Ascending aorta (tissue), 2 donors: ENCODE measurements at regions of chr5 and their contacts with region 1.

Region 1: DNA sequence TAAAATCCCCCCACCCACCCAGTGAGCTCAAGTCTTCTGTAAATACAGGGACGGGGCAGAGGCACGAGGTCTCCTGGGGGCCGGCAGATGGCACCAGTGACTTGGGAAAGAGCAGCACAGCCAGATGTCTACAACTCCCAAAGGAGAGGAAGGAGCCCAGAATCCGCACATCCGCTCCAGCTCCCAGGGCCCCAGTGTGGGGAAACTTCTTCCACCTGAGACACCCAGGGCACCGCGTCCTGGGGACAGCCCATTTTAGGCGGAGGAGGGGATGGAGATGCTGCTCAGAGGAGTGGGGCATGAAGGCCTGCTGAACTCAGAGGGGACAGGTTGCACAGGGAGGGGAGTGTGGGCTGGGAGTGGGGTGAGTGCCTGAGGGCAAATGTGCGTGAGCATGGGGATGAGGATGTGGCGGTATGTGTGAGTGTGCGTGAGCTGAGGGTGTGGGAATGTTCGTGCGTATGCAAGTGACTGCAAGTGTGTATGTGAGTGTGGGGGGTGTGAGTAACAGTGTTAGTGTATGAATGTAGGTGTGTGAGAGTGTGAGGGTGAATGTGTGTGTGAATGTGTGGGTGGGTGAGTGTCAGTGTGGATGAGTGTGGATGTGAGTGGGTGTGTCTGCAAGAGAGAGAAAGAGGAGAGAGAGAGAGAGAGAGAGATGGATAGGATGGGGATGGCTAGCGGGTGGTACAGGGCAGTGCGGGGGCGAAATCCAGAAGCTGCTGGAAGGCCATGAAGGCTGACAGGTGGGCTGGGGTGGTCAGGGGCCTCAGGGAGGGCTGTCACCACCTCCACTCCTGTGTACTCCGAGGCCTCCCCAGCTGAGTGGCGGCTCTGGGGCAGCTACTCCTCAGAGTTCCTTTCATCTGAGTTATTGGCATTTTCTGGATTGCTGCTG is 63.5 kb downstream of the DUSP1 start:
- DNase-seq: no peak
- H3K4me3 ChIP-seq: no peak overlapping the region
- H3K27ac ChIP-seq: no peak overlapping the region
- H3K4me1 ChIP-seq: no peaks in the 10 kb centered on the region
- H3K27me3 ChIP-seq: no peaks in the 10 kb centered on the region
- CTCF ChIP-seq: peak in 1 of 3 experiments; percentile 20

Region 2: GRCh38 chr5:172646716-172647285 is 60.7 kb before region 1 on chr5:
- intact Hi-C with region 1: no loop called
- DNase-seq: no peak
- H3K4me3 ChIP-seq: no peak overlapping the region
- H3K27ac ChIP-seq: peak overlapping the region in 1 of 2 donors; percentile 6
- H3K4me1 ChIP-seq: no peaks in the 10 kb centered on the region
- H3K27me3 ChIP-seq: no peaks in the 10 kb centered on the region
- CTCF ChIP-seq: peak in 1 of 3 experiments; percentile 27

Region 3: DNA sequence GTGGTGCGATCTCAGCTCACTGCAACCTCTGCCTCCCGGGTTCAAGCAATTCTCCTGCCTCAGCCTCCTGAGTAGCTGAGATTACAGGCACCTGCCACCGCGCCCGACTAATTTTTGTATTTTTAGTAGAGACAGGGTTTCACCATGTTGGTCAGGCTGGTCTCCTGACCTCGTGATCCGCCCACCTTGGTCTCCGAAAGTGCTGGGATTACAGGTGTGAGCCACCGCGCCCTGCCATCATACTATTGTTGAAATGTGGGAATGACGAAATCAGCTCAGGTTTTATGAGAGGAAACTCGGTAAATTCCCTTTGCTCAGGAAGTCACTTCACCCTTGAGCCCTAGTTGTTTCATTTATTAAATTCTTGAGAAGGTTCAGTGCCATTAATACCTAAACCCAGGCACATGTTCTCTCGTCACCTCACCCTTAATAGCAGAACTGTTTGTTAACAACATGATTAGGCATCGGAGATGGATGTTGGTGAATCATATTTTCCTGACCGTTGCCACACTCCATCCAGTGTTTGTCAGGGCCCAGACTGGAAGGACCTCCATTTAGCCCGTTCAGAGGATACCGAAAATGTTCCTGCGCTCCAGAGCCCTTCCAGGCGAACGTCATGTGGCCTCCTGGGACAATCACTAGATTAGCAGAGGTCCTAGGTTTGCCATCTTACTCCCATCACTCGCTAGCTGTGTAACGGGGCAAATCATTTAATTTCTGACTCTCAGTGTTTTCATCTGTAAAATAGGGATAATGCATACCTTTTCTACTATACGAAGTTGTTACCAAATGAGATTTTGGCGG is 328.6 kb after region 1 on chr5:
- intact Hi-C with region 1: no loop called
- DNase-seq: no peak
- H3K4me3 ChIP-seq: peak overlapping the region in 1 of 2 donors; percentile 53
- H3K27ac ChIP-seq: peak overlapping the region; percentile 88 to 93
- H3K4me1 ChIP-seq: peaks cover 12 to 41% of the 10 kb centered on the region in 2 donors
- H3K27me3 ChIP-seq: no peaks in the 10 kb centered on the region
- CTCF ChIP-seq: no peak

Region 4: GRCh38 chr5:173283318-173284288 is 576.1 kb after region 1 on chr5:
- intact Hi-C with region 1: loop called (anchors 5 kb)
- DNase-seq: peak in 1 of 2 donors; percentile 66
- H3K4me3 ChIP-seq: peak overlapping the region; percentile 37 to 56
- H3K27ac ChIP-seq: no peak overlapping the region
- H3K4me1 ChIP-seq: peaks cover 3 to 4% of the 10 kb centered on the region in 2 donors
- H3K27me3 ChIP-seq: no peaks in the 10 kb centered on the region
- CTCF ChIP-seq: peak; percentile 45 to 74 (median 58)

Region 5: GRCh38 chr5:173573126-173573960 is 865.8 kb after region 1 on chr5:
- intact Hi-C with region 1: loop called (anchors 10 kb)
- DNase-seq: peak in 1 of 2 donors; percentile 80
- H3K4me3 ChIP-seq: peak overlapping the region; percentile 9 to 32
- H3K27ac ChIP-seq: no peak overlapping the region
- H3K4me1 ChIP-seq: peaks cover 0 to 3% of the 10 kb centered on the region in 2 donors
- H3K27me3 ChIP-seq: no peaks in the 10 kb centered on the region
- CTCF ChIP-seq: peak; percentile 86 to 98 (median 96)